Sigmoid colon (tissue), 7 donors: ENCODE measurements at regions of chr12 and their contacts with region 1.

Region 1: DNA sequence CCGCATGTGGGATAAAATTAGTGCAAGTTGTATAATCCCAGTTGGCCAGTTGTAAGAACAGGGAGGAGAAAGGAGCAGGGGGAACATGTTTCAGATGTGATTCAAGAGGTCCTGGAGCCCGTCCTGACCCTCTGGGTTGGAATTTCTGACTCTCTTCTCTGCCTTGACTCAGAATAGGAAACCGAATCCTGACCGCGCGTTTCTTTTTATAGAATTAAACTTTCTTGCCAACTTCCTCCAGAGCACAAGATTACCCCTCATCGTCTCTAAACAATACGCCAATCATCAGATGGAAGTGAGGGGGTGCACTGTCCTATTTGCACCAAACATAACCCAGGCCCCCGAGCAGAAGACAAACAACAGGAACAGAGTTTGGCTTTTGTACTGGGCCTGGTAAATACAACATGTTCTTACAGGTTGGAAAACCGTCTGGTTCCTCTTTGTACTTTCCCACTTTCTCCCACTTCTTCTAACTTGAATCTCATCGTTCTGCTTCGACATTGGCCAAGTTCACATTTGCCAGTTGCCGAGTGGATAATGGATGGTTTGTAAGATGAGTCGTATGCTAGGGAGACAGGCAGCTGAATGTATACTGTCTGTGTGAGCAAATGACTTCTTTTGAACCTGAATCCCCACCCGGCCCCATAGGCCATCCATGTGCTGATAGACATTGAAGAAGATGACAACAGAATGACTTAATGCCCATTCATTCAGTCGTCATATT is 42.6 kb upstream of the MED13L start:
- DNase-seq: peak; percentile 96
- H3K4me3 ChIP-seq: peak overlapping the region in 2 of 4 donors; percentile 13 to 15
- H3K27ac ChIP-seq: peak overlapping the region; percentile 82 to 90 (median 88)
- H3K4me1 ChIP-seq: peaks cover 3 to 33% (median 30%) of the 10 kb centered on the region in 4 donors
- H3K27me3 ChIP-seq: no peaks in the 10 kb centered on the region
- CTCF ChIP-seq: no peak
- EP300 ChIP-seq: peak; percentile 86 to 97 (median 94)
- POLR2A ChIP-seq: no peak

Region 2: GRCh38 chr12:116358893-116359761 is 39.1 kb after region 1 on chr12:
- intact Hi-C with region 1: loop called (anchors 2 kb)
- DNase-seq: peak; percentile 96
- H3K4me3 ChIP-seq: no peak overlapping the region
- H3K27ac ChIP-seq: peak overlapping the region; percentile 71 to 82 (median 77)
- H3K4me1 ChIP-seq: peaks cover 0 to 18% (median 13%) of the 10 kb centered on the region in 4 donors
- H3K27me3 ChIP-seq: no peaks in the 10 kb centered on the region
- CTCF ChIP-seq: no peak
- EP300 ChIP-seq: no peak
- POLR2A ChIP-seq: no peak

Region 3: GRCh38 chr12:116434155-116435011 is 114.3 kb after region 1 on chr12:
- intact Hi-C with region 1: loop called (anchors 5 kb)
- DNase-seq: peak; percentile 95
- H3K4me3 ChIP-seq: peak overlapping the region in 3 of 4 donors; percentile 14 to 30 (median 18)
- H3K27ac ChIP-seq: peak overlapping the region; percentile 69 to 89 (median 80)
- H3K4me1 ChIP-seq: peaks cover 0 to 31% (median 23%) of the 10 kb centered on the region in 4 donors
- H3K27me3 ChIP-seq: no peaks in the 10 kb centered on the region
- CTCF ChIP-seq: no peak
- EP300 ChIP-seq: peak; percentile 45 to 92 (median 69)
- POLR2A ChIP-seq: no peak

Region 4: GRCh38 chr12:116533343-116534251 is 213.5 kb after region 1 on chr12:
- intact Hi-C with region 1: loop called (anchors 2 kb)
- DNase-seq: peak; percentile 93
- H3K4me3 ChIP-seq: peak overlapping the region; percentile 42 to 61 (median 52)
- H3K27ac ChIP-seq: peak overlapping the region; percentile 83 to 89 (median 84)
- H3K4me1 ChIP-seq: peaks cover 0 to 30% (median 28%) of the 10 kb centered on the region in 4 donors
- H3K27me3 ChIP-seq: no peaks in the 10 kb centered on the region
- CTCF ChIP-seq: no peak
- EP300 ChIP-seq: peak in 1 of 4 donors; percentile 22
- POLR2A ChIP-seq: no peak

Region 5: DNA sequence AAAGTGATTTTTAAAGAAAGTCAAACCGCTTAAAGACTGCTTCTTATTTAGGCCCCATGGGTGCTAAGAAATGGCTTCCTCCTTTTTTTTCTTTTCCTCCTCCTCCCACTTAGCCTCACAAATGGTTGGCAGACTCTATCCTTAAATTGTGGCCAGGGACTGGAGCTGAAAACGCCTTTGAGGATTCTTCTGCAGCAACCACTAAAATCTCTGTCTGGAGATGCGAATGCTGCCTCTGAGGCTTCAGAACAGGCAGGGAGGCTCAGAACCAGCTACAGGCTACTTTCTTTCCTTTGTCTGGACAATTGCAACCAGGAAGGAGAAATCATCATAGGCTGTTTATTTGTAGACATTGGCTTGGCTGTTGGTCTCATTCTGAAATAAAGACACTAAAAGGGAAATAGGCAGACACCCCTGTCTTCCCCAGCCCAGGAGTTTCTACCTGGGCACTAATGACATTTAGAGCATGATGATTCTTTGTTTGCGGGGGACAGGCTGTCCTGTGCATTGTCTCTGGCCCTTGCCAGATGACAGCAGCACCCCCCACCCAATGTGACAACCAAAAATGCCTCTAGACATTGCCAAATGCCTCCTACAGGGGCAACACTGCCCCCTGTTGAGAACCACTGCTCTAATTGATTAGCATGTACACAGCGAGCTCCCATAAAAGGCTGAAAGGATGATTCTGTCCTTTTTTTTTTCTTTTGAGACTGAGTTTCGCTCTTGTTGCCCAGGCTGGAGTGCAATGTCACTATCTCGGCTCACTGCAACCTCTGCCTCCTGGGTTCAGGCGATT is 289.5 kb after region 1 on chr12:
- intact Hi-C with region 1: no loop called
- DNase-seq: no peak
- H3K4me3 ChIP-seq: no peak overlapping the region
- H3K27ac ChIP-seq: no peak overlapping the region
- H3K4me1 ChIP-seq: no peaks in the 10 kb centered on the region
- H3K27me3 ChIP-seq: no peaks in the 10 kb centered on the region
- CTCF ChIP-seq: no peak
- EP300 ChIP-seq: no peak
- POLR2A ChIP-seq: no peak

Region 6: GRCh38 chr12:116794725-116795124 is 474.7 kb after region 1 on chr12:
- intact Hi-C with region 1: no loop called
- DNase-seq: no peak
- H3K4me3 ChIP-seq: no peak overlapping the region
- H3K27ac ChIP-seq: no peak overlapping the region
- H3K4me1 ChIP-seq: no peaks in the 10 kb centered on the region
- H3K27me3 ChIP-seq: no peaks in the 10 kb centered on the region
- CTCF ChIP-seq: no peak
- EP300 ChIP-seq: no peak
- POLR2A ChIP-seq: no peak